Adrenal gland (tissue), 19 donors: ENCODE measurements at regions of chr6 and their contacts with region 1.

Region 1: DNA sequence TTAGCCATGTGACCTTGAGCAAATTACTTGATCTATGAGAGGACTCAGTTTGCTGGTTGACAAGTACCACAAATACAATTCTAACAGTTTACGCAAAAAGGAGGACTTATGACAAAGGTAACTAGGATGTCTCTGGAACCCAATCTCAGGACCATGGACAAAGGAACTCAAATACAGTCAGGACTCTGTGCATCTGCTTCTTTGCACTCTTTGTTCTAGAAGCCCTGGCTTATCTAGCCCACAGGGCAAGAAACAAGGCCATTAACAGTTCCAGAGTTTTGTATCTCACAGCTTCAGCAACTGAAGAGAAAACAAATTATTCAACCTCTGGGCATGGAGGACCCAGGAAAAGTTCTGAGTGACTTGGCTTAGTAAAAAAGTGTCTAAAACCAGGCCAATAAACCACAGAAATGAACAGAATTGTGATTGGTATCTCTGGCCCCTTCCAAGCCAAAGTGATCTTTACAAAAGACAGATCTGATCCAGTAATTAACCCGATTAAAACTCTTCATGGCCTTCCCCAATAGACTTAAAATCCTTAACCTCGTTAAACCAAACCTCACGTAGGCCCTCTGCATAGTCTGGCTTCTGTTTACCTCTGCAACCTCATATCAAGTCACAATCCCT is 5.9 kb downstream of the WASF1 start:
- DNase-seq: no peak
- H3K4me3 ChIP-seq: no peak overlapping the region
- H3K27ac ChIP-seq: peak overlapping the region in 1 of 5 donors; percentile 2
- H3K4me1 ChIP-seq: peaks cover 0 to 7% of the 10 kb centered on the region in 2 donors
- H3K27me3 ChIP-seq: no peaks in the 10 kb centered on the region
- CTCF ChIP-seq: no peak
- POLR2A ChIP-seq: no peak

Region 2: GRCh38 chr6:110063594-110064263 is 109.9 kb before region 1 on chr6:
- intact Hi-C with region 1: no loop called
- DNase-seq: no peak
- H3K4me3 ChIP-seq: no peak overlapping the region
- H3K27ac ChIP-seq: no peak overlapping the region
- H3K4me1 ChIP-seq: no peaks in the 10 kb centered on the region
- H3K27me3 ChIP-seq: peaks cover 11% of the 10 kb centered on the region
- CTCF ChIP-seq: no peak
- POLR2A ChIP-seq: no peak

Region 3: GRCh38 chr6:110389689-110390382 is 216.2 kb after region 1 on chr6:
- intact Hi-C with region 1: loop called in 1 of 2 experiments (anchors 5 kb)
- DNase-seq: no peak
- H3K4me3 ChIP-seq: no peak overlapping the region
- H3K27ac ChIP-seq: no peak overlapping the region
- H3K4me1 ChIP-seq: peaks cover 0 to 4% of the 10 kb centered on the region in 2 donors
- H3K27me3 ChIP-seq: no peaks in the 10 kb centered on the region
- CTCF ChIP-seq: no peak
- POLR2A ChIP-seq: no peak